ENCODE measurements at regions of chr3 and their contacts with region 1.

Region 1: GRCh38 chr3:107235928-107236315 is 141.3 kb upstream of the CCDC54 start:
- DNase-seq: peak in 7 of 9 donors; percentile 43 to 78 (median 73)
- ATAC-seq: peak; percentile 84
- H3K4me3 ChIP-seq: peak overlapping the region; percentile 42
- H3K4me3 Mint-ChIP-seq: peak overlapping the region in 9 of 10 donors; percentile 40 to 80 (median 61)
- H3K27ac ChIP-seq: no peak overlapping the region
- H3K27ac Mint-ChIP-seq: peak overlapping the region in 1 of 9 donors; percentile 33
- H3K4me1 ChIP-seq: peaks cover 0 to 2% of the 10 kb centered on the region in 2 donors
- H3K4me1 Mint-ChIP-seq: peaks cover 2 to 17% (median 12%) of the 10 kb centered on the region in 7 donors
- H3K27me3 ChIP-seq: no peaks in the 10 kb centered on the region
- H3K27me3 Mint-ChIP-seq: peaks cover 0 to 35% (median 10%) of the 10 kb centered on the region in 5 donors

Region 2: DNA sequence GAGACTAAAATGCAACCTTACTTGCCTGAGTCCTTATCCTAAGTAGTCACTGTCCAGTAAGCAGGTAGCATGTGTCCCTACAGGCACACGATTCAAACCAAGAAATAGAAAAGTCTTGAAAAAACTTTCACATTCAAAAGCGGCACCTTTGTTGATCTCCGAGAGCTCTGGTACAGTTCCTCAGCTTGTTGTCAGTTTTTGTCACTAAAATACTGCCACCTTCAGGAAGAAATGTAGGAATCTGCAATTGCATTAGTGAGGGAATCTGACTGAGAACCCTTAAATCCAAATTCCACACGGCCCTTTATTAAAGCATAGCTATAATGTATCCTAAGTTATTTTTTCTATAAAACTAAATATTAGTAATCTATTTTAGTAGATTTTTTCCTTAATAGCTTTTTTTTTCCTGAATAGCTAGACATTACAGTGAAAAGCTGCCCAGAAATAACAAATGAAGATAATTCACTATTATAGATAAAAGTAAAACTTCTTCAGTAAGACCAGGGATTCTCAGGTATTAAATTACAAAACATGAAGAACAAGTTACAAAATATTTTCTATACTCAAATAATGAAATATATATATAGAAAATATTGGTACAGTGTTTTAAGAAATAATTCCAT is 185.4 kb after region 1 on chr3:
- CTCF ChIA-PET with region 1: interaction called, 23 read pairs
- POLR2A ChIA-PET with region 1: no interaction called
- intact Hi-C with region 1: loop called (anchors 1 kb)
- DNase-seq: peak in 5 of 9 donors; percentile 47 to 63 (median 53)
- ATAC-seq: peak; percentile 82
- H3K4me3 ChIP-seq: no peak overlapping the region
- H3K4me3 Mint-ChIP-seq: peak overlapping the region in 8 of 10 donors; percentile 31 to 72 (median 66)
- H3K27ac ChIP-seq: no peak overlapping the region
- H3K27ac Mint-ChIP-seq: peak overlapping the region in 1 of 9 donors; percentile 1
- H3K4me1 ChIP-seq: no peaks in the 10 kb centered on the region
- H3K4me1 Mint-ChIP-seq: peaks cover 2 to 5% (median 3%) of the 10 kb centered on the region in 7 donors
- H3K27me3 ChIP-seq: no peaks in the 10 kb centered on the region
- H3K27me3 Mint-ChIP-seq: peaks cover 10 to 50% (median 21%) of the 10 kb centered on the region in 5 donors

Region 3: GRCh38 chr3:107660306-107660976 is 424.5 kb after region 1 on chr3:
- CTCF ChIA-PET with region 1: no interaction called
- POLR2A ChIA-PET with region 1: no interaction called
- intact Hi-C with region 1: loop called (anchors 5 kb)
- DNase-seq: peak in 6 of 9 donors; percentile 11 to 43 (median 34)
- ATAC-seq: peak; percentile 67
- H3K4me3 ChIP-seq: no peak overlapping the region
- H3K4me3 Mint-ChIP-seq: no peak overlapping the region
- H3K27ac ChIP-seq: no peak overlapping the region
- H3K27ac Mint-ChIP-seq: no peak overlapping the region
- H3K4me1 ChIP-seq: peaks cover 0 to 13% of the 10 kb centered on the region in 2 donors
- H3K4me1 Mint-ChIP-seq: peaks cover 15 to 45% (median 31%) of the 10 kb centered on the region in 7 donors
- H3K27me3 ChIP-seq: no peaks in the 10 kb centered on the region
- H3K27me3 Mint-ChIP-seq: no peaks in the 10 kb centered on the region

Region 4: DNA sequence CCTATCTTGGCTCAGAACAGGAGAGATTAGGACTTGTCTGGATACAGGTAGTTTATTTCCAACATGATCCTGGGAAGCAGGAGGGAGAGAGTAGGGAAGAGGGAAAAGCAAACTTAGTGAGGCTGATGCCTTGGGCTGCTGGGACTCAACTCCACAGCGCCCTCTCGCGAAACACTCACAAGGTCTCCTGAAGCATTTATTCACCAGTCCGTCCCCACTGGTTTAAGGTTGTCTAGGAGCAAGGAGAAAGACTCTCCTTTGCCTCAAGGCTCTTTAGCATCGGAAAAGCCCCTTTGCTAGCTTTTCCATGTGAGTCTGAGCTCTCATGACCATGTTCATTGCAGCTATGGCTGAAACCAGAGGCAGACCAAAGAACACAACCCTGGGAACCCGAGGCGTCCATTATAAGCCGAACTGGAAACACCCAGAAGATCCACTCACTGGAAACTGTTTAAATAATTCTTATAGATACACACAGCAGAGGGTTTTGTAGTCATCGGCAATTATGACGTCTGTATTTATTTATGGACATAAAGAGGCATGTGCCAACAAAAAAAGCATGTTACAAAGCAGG is 610.4 kb after region 1 on chr3:
- CTCF ChIA-PET with region 1: no interaction called
- POLR2A ChIA-PET with region 1: no interaction called
- intact Hi-C with region 1: loop called (anchors 1 to 2 kb)
- DNase-seq: peak in 5 of 9 donors; percentile 2 to 20 (median 6)
- ATAC-seq: no peak
- H3K4me3 ChIP-seq: no peak overlapping the region
- H3K4me3 Mint-ChIP-seq: no peak overlapping the region
- H3K27ac ChIP-seq: no peak overlapping the region
- H3K27ac Mint-ChIP-seq: no peak overlapping the region
- H3K4me1 ChIP-seq: no peaks in the 10 kb centered on the region
- H3K4me1 Mint-ChIP-seq: no peaks in the 10 kb centered on the region
- H3K27me3 ChIP-seq: no peaks in the 10 kb centered on the region
- H3K27me3 Mint-ChIP-seq: peaks cover 0 to 13% (median 0%) of the 10 kb centered on the region in 5 donors

Region 5: DNA sequence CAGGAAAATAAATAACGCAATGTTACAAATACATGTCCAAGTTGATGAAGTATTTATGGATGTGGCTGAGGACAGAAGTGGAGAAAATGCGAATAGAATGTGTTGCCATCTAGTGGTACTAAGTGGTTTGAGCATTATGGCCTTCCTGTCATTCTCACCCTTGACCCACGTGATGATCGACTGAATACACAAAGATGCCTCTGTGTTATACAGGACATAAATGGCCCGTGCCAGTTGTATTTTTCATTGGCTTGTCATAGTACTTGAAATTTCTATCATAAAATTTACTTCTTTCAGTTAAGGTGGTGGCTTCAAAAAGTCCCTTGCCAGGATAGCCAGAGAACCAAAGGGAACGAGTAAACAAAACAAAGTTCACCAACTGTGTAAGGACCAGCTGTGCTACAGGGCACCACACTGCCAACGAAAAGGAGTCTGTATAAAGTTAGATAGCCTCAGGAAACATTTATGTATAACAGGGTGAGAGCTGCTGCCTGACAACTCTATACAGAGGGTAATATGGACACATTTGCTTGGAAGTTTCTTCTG is 1170.8 kb after region 1 on chr3:
- CTCF ChIA-PET with region 1: no interaction called
- POLR2A ChIA-PET with region 1: no interaction called
- intact Hi-C with region 1: loop called in 1 of 2 experiments (anchors 1 kb)
- DNase-seq: peak in 4 of 9 donors; percentile 18 to 57 (median 50)
- ATAC-seq: peak; percentile 82
- H3K4me3 ChIP-seq: no peak overlapping the region
- H3K4me3 Mint-ChIP-seq: no peak overlapping the region
- H3K27ac ChIP-seq: no peak overlapping the region
- H3K27ac Mint-ChIP-seq: peak overlapping the region in 1 of 9 donors; percentile 2
- H3K4me1 ChIP-seq: no peaks in the 10 kb centered on the region
- H3K4me1 Mint-ChIP-seq: peaks cover 0 to 6% (median 2%) of the 10 kb centered on the region in 7 donors
- H3K27me3 ChIP-seq: no peaks in the 10 kb centered on the region
- H3K27me3 Mint-ChIP-seq: peaks cover 0 to 6% (median 0%) of the 10 kb centered on the region in 5 donors

Region 6: DNA sequence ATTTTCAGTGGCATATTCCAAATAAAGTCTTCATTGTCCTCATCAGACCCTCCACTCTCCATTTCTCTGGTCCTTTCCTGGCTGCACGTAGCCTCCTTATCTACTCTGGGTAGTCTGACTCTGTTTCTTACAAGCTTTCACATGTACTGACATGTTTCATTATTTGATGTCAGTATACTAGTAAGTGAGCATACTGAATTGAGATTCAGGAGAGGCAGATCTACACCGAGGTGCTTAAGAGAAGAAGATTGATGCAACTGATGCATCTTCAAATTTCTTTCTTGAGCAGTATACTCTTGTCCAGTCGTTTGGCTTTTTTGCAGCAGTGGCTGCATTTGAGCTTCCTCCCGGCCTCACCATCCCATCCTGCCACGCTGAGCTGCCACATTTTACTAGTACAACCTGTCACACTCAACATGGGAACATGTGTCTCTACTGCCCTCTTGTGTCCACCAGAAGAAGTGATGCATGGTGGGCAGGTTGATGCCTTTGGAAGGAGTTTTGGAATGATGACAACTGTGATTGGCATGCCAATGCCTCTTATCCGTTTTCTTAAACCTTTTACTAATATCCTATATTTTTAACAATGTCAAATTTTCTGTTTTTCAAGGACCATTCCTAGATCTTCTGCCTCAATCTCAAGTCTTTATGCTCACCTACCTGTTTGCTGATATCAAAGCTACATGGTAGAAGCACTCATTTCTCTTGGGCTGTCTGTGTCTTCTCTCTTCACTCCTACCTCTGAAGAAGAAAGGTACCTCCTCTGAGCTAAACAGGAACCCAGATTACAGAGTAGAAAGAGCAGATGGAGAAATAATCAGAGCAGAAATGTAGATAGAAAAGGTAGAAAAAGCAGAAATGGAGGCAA is 1679.1 kb after region 1 on chr3:
- CTCF ChIA-PET with region 1: no interaction called
- POLR2A ChIA-PET with region 1: no interaction called
- intact Hi-C with region 1: loop called in 1 of 2 experiments (anchors 10 kb)
- DNase-seq: peak; percentile 17 to 82 (median 71)
- ATAC-seq: peak; percentile 94
- H3K4me3 ChIP-seq: no peak overlapping the region
- H3K4me3 Mint-ChIP-seq: peak overlapping the region; percentile 43 to 72 (median 66)
- H3K27ac ChIP-seq: no peak overlapping the region
- H3K27ac Mint-ChIP-seq: peak overlapping the region in 6 of 9 donors; percentile 11 to 60 (median 32)
- H3K4me1 ChIP-seq: peaks cover 5 to 9% of the 10 kb centered on the region in 2 donors
- H3K4me1 Mint-ChIP-seq: peaks cover 12 to 21% (median 18%) of the 10 kb centered on the region in 7 donors
- H3K27me3 ChIP-seq: no peaks in the 10 kb centered on the region
- H3K27me3 Mint-ChIP-seq: peaks cover 0 to 33% (median 0%) of the 10 kb centered on the region in 5 donors

Measured in naive thymus-derived CD4-positive, alpha-beta T cell (primary cell).